Activated CD8-positive, alpha-beta T cell treated with anti-CD3 and anti-CD28 coated beads for 36 hours (primary cell): ENCODE measurements at regions of chr7 and their contacts with region 1.

Region 1: DNA sequence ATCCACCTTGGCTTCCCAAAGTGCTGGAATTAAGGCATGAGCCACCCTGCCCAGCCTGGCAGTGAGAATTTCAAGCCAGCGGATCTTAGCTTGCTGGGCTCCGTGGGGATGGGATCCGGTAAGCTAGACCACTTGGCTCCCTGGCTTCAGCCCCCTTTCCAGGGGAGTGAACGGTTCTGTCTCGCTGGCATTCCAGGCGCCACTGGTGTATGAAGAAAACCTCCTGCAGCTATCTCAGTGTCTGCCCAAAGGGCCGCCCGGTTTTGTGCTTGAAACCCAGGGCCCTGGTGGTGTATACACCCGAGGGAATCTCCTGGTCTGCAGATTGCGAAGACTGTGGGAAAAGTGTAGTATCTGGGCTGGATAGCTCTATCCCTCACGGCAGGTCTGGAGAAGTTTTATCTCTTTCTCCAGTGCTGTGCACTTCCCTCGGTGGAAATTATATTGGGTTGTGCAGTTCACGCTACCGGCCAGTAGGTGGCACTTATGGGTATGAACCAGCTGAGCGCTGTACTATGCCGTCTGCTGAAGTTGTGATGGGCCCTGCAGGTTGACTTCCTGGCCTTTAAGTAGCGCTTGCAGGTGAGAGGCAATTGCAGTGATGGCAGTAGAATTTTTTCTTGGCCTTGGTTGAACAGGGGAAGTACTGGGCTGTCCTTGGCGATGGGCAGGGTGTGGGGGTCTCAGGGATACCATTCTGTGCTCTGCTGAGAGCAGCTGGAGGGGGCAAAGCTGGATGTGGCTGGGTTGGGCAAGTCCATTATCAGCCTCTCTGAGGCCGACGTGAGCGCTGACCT is 138.0 kb upstream of the MTPN start:
- DNase-seq: peak; percentile 73
- ATAC-seq: peak; percentile 95
- H3K4me3 Mint-ChIP-seq: no peak overlapping the region
- H3K27ac Mint-ChIP-seq: no peak overlapping the region
- H3K4me1 Mint-ChIP-seq: no peaks in the 10 kb centered on the region
- H3K27me3 Mint-ChIP-seq: no peaks in the 10 kb centered on the region
- CTCF ChIP-seq: peak; percentile 83

Region 2: DNA sequence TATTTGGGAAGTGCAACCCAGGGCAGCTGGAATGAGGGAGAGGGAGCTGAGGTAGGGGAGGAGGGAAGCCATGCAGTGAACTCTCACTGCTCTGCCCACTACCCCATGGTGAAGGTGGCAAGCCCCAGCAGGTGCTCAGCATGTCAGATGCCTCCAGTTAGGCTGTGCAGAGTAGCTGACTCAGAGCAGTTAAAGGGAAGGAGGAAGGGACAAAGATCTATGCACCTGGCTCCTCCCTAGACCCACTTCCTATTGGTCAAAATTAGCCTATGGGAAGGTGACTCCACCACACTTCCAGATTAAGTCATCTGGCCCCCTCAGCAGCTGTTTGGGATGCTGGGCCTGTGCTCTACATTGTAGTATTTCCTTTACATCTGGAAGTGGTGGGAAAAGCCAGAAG is 12.3 kb before region 1 on chr7:
- CTCF ChIA-PET with region 1: interaction called, 10 read pairs
- POLR2A ChIA-PET with region 1: no interaction called
- intact Hi-C with region 1: no loop called
- DNase-seq: no peak
- ATAC-seq: no peak
- H3K4me3 Mint-ChIP-seq: no peak overlapping the region
- H3K27ac Mint-ChIP-seq: no peak overlapping the region
- H3K4me1 Mint-ChIP-seq: no peaks in the 10 kb centered on the region
- H3K27me3 Mint-ChIP-seq: no peaks in the 10 kb centered on the region
- CTCF ChIP-seq: no peak

Region 3: GRCh38 chr7:136174477-136175125 is 59.4 kb after region 1 on chr7:
- CTCF ChIA-PET with region 1: no interaction called
- POLR2A ChIA-PET with region 1: no interaction called
- intact Hi-C with region 1: no loop called
- DNase-seq: no peak
- ATAC-seq: no peak
- H3K4me3 Mint-ChIP-seq: no peak overlapping the region
- H3K27ac Mint-ChIP-seq: no peak overlapping the region
- H3K4me1 Mint-ChIP-seq: peaks cover 5% of the 10 kb centered on the region
- H3K27me3 Mint-ChIP-seq: no peaks in the 10 kb centered on the region
- CTCF ChIP-seq: no peak